HEK293 (cell line): ENCODE measurements at regions of chr22 and their contacts with region 1.

Region 1: GRCh38 chr22:41762980-41763779 is 37.3 kb upstream of the CCDC134 start:
- H3K4me3 ChIP-seq: no peak overlapping the region
- H3K27ac ChIP-seq: no peak overlapping the region
- H3K4me1 ChIP-seq: no peaks in the 10 kb centered on the region
- CTCF ChIP-seq: peak; percentile 53; the same call in 1 of the 2 replicates

Region 2: GRCh38 chr22:41479671-41480396 is 283.3 kb before region 1 on chr22:
- CTCF ChIA-PET with region 1: no interaction called
- POLR2A ChIA-PET with region 1: no interaction called
- H3K4me3 ChIP-seq: no peak overlapping the region
- H3K27ac ChIP-seq: no peak overlapping the region
- H3K4me1 ChIP-seq: no peaks in the 10 kb centered on the region
- CTCF ChIP-seq: no peak

Region 3: DNA sequence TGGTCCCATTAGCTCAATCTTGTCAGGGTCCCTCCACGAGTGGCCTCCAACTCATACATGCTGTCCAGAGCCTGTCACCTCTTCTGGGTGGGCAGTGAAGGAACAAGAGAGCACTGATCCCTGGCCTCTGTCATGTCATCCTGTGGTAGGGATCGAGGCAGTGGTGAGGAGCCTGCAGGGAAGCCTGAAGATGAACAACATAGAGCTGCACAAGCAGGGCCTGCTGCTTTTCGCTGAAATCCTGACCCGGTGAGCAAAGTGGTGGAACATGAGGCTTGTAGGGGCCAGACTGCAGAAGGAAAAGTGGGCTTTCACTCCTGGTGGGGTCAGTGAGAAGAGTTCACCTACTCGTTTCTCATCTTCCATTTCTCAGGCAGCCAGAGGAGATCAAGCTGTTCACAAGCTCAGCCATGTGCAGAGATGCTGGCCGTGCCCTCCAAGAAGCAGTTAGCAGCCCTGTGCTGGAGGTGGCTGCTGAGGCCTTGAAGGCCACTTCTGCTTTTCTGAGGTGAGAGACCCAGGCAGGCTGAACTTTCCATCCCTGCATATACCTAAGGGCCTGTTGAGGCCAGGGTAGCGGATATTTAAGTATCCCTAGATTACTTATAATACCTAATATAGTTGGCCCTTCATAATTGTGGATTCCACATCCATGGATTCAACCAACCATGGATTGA is 30.9 kb before region 1 on chr22:
- CTCF ChIA-PET with region 1: interaction called, 10 read pairs
- POLR2A ChIA-PET with region 1: no interaction called
- H3K4me3 ChIP-seq: no peak overlapping the region
- H3K27ac ChIP-seq: no peak overlapping the region
- H3K4me1 ChIP-seq: no peaks in the 10 kb centered on the region; the same call in 1 of the 2 replicates
- CTCF ChIP-seq: no peak